HEK293 (cell line): ENCODE measurements at regions of chr1 and their contacts with region 1.

Region 1: GRCh38 chr1:201506556-201507359 is at the start of gene CSRP1:
- H3K4me3 ChIP-seq: peak within 1 kb of the TSS; percentile 62
- H3K27ac ChIP-seq: peak within 1 kb of the TSS; percentile 6; the same call in 1 of the 2 replicates
- H3K4me1 ChIP-seq: no peaks in the 10 kb centered on the region; the same call in none of the 2 replicates
- CTCF ChIP-seq: no peak

Region 2: DNA sequence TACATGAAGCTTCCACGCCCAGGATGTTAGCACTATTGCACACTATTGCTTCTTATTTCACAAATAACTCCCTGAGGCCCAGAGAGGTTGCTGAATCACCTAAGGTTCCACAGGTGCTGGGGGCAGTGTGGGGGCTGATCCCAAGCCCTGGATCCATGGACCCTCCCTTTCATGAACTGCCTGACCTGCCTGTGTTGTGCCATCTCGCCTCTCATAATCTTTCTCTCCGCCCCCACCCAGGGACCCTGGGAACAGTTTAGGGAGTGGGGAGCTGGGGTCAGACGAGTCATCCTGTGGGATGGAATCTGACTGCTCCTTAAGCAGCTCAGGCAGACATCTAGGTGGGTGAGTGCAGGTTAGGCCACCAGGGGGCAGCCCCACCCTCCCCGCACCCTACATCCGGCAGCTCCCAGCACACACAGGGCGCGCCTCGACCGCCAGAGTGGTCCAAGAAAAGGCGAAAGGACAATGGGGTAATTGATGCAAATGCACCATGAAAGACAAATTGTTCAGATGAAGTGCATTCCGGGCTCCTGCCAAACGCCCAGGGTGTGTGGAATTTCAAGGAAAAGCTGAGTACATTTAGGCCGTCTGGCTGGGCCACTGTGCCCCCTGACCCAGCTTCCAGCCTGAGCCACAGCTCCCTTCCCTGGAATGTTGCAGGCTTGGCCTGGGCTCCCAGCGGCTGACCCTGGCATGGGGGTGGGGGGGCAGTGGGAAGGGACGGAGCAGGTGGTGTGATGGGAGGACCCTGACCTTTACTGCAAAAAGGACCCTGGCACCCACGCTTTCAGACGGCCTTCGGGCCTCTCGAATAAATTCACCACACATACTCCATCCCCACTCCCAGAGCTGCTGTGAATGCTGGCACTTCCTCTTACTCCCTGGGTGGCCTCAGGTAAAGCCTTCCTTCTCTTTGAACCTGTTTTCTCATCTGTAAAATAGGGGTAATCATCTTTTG is 58.6 kb before region 1 on chr1:
- CTCF ChIA-PET with region 1: interaction called, 129 read pairs
- POLR2A ChIA-PET with region 1: interaction called, 3 read pairs
- H3K4me3 ChIP-seq: no peak overlapping the region
- H3K27ac ChIP-seq: no peak overlapping the region
- H3K4me1 ChIP-seq: 0 out of 2 replicates have a peak, but pooled peaks cover 6% of the 10 kb centered on the region
- CTCF ChIP-seq: peak; percentile 66

Region 3: GRCh38 chr1:201517948-201518470 is 11.3 kb after region 1 on chr1:
- CTCF ChIA-PET with region 1: interaction called, 74 read pairs
- POLR2A ChIA-PET with region 1: interaction called, 10 read pairs
- H3K4me3 ChIP-seq: no peak overlapping the region
- H3K27ac ChIP-seq: no peak overlapping the region
- H3K4me1 ChIP-seq: no peaks in the 10 kb centered on the region
- CTCF ChIP-seq: no peak

Region 4: GRCh38 chr1:201602413-201603265 is 95.9 kb after region 1 on chr1:
- CTCF ChIA-PET with region 1: no interaction called
- POLR2A ChIA-PET with region 1: no interaction called
- H3K4me3 ChIP-seq: no peak overlapping the region
- H3K27ac ChIP-seq: peak overlapping the region; percentile 25; the same call in 1 of the 2 replicates
- H3K4me1 ChIP-seq: peaks cover 15% of the 10 kb centered on the region
- CTCF ChIP-seq: no peak